K562 (cell line): ENCODE measurements at regions of chr1 and their contacts with region 1.

Region 1: GRCh38 chr1:214648801-214649200 is 45.8 kb downstream of the CENPF start:
- DNase-seq: no peak
- ATAC-seq: no peak
- H3K4me3 ChIP-seq: no peak overlapping the region
- H3K27ac ChIP-seq: no peak overlapping the region
- H3K4me1 ChIP-seq: no peaks in the 10 kb centered on the region
- H3K27me3 ChIP-seq: no peaks in the 10 kb centered on the region
- CTCF ChIP-seq: no peak
- EP300 ChIP-seq: no peak
- POLR2A ChIP-seq: no peak
- RAD21 ChIP-seq: no peak

Region 2: GRCh38 chr1:214637722-214638458 is 10.9 kb before region 1 on chr1:
- CTCF ChIA-PET with region 1: no interaction called
- POLR2A ChIA-PET with region 1: interaction called, 12 read pairs
- in situ Hi-C with region 1: no loop called
- intact Hi-C with region 1: no loop called
- DNase-seq: peak in 3 of 4 experiments; percentile 15 to 50 (median 29)
- ATAC-seq: peak; percentile 81
- H3K4me3 ChIP-seq: no peak overlapping the region
- H3K27ac ChIP-seq: no peak overlapping the region
- H3K4me1 ChIP-seq: no peaks in the 10 kb centered on the region
- H3K27me3 ChIP-seq: no peaks in the 10 kb centered on the region
- CTCF ChIP-seq: peak; percentile 30 to 54 (median 53); a peak in 4 of 6 replicates
- EP300 ChIP-seq: no peak
- POLR2A ChIP-seq: no peak
- RAD21 ChIP-seq: peak; percentile 35 to 49; a peak in 3 of 4 replicates

Region 3: DNA sequence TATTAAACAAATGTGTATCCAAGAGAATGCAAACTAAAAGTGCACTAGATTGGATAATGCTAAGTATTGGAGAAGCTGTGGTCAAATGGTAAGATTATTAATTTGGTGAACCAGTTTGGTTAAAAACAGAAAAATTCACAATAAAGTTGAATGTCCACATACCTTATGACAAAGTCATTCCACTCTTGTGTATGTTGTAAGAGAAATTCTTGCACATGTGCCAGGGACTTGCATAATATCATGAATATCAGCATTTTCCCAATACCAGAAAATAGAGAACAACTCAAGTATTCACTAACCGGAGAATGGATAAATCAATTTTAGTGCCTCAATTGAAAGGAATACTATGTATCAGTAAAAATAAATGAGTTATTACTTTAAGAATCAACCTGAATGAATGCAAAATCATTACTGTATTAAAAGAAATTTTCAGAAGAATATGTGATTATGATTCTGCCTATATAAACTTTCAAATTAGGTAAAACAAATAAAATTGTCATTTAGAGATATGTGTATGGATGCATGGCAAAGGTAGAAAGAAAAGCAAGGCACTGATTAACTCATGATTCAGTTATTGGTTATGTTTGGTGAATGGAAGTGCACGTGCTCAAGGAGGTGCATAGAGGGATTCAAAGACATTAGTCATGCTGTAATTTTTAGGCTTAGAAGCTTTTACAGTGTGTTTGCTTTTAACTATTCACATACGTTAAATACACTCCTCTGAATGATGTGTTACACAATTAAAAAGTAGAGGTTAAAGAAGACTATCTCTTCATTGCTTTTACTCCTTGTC is 216.3 kb after region 1 on chr1:
- CTCF ChIA-PET with region 1: no interaction called
- POLR2A ChIA-PET with region 1: no interaction called
- in situ Hi-C with region 1: no loop called
- intact Hi-C with region 1: no loop called
- DNase-seq: no peak
- ATAC-seq: no peak
- H3K4me3 ChIP-seq: no peak overlapping the region
- H3K27ac ChIP-seq: no peak overlapping the region
- H3K4me1 ChIP-seq: no peaks in the 10 kb centered on the region
- H3K27me3 ChIP-seq: no peaks in the 10 kb centered on the region
- CTCF ChIP-seq: no peak
- EP300 ChIP-seq: no peak
- POLR2A ChIP-seq: no peak
- RAD21 ChIP-seq: no peak